Mammary epithelial cell (primary cell): ENCODE measurements at regions of chr2 and their contacts with region 1.

Region 1: GRCh38 chr2:136086253-136087016 is 31.5 kb downstream of the CXCR4 start:
- DNase-seq: no peak
- H3K4me3 ChIP-seq: no peak overlapping the region
- H3K27ac ChIP-seq: no peak overlapping the region
- H3K4me1 ChIP-seq: no peaks in the 10 kb centered on the region
- H3K27me3 ChIP-seq: no peaks in the 10 kb centered on the region
- CTCF ChIP-seq: no peak

Region 2: DNA sequence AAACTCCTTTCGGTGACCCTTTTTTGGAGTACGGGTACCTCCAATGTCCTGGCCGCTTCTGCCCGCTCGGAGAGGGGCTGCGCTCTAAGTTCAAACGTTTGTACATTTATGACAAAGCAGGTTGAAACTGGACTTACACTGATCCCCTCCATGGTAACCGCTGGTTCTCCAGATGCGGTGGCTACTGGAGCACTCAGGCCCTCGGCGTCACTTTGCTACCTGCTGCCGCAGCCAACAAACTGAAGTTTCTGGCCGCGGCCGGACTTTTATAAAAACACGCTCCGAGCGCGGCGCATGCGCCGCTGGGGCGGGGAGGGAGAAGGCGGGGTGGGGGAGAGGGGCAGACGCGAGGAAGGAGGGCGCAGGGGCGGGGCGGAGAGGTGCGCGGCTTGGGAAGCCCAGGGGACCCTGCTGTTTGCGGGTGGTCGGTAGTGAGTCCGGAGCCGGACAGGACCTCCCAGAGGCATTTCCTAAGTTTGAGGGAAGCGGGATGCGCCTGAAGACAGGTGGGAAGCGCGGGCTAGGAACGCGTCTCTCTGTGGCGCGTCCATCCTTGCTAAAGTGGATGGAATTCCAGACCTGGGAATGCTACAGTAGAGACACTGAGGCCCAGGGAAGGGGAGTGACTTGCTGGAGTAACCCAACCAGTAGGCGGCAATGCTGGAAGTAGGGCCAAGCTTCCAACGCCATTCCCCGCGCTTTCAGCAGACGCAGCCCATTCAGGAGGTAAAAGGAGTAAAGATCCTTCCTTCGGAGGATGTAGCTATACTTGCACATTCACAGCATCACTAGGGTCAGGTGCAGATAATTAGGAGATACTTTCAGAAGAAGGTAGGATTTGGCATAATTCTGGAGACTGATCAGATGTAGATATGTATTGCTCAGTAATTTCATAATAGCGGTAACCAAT is 31.7 kb after region 1 on chr2 and contains the start of gene CXCR4:
- CTCF ChIA-PET with region 1: no interaction called
- dilution Hi-C with region 1: loop called (anchors 5 kb)
- in situ Hi-C with region 1: no loop called
- intact Hi-C with region 1: no loop called
- DNase-seq: peak; percentile 21
- H3K4me3 ChIP-seq: peak within 1 kb of the TSS in 1 of 3 experiments; percentile 4
- H3K27ac ChIP-seq: no peak within 1 kb of the TSS
- H3K4me1 ChIP-seq: peaks cover 17% of the 10 kb centered on the region
- H3K27me3 ChIP-seq: peaks cover 49% of the 10 kb centered on the region
- CTCF ChIP-seq: peak in 1 of 2 donors; percentile 19
- total RNA-seq, gene CXCR4: not detected